Naive thymus-derived CD4-positive, alpha-beta T cell (primary cell): ENCODE measurements at regions of chr9 and their contacts with region 1.

Region 1: GRCh38 chr9:3441197-3441816 is 84.5 kb downstream of the RFX3 start:
- DNase-seq: peak in 8 of 9 donors; percentile 8 to 55 (median 39)
- ATAC-seq: peak; percentile 90
- H3K4me3 ChIP-seq: no peak overlapping the region
- H3K4me3 Mint-ChIP-seq: no peak overlapping the region
- H3K27ac ChIP-seq: no peak overlapping the region
- H3K27ac Mint-ChIP-seq: peak overlapping the region in 1 of 9 donors; percentile 49
- H3K4me1 ChIP-seq: no peaks in the 10 kb centered on the region
- H3K4me1 Mint-ChIP-seq: peaks cover 3 to 16% (median 11%) of the 10 kb centered on the region in 7 donors
- H3K27me3 ChIP-seq: no peaks in the 10 kb centered on the region
- H3K27me3 Mint-ChIP-seq: no peaks in the 10 kb centered on the region

Region 2: DNA sequence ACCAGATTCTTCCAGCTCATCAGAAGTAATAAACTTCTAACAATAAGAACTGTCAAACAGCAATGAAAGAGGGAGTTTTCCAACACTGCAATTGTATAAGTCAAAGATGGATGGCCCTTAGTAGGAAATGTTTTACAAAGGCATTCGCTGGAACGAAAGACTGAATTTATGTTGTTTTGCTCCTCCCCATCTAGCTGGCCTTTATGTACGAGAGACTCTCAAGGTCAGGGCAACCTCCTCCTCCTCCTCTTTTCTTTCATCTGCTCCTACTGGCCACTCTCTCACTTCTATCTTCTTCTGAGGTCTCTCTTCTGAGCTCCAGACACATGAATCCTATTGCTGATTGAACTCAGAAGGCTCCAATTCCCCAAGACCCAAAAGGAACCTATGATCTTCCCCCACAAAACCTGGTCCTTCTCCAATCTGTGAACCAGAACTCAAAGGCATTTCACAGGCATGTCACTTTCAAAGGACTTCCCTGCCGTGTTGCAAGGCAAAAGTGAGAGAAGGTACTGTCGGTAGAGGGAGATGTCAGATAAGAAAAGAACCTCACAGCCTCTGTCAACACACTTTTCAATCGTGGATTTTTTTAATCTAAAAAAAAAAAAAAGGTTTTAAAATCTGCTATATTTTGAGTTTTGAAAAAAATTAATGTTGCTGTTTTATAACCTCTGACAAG is 568.9 kb before region 1 on chr9:
- CTCF ChIA-PET with region 1: no interaction called
- POLR2A ChIA-PET with region 1: no interaction called
- intact Hi-C with region 1: loop called in 1 of 2 experiments (anchors 1 kb)
- DNase-seq: peak in 7 of 9 donors; percentile 18 to 56 (median 48)
- ATAC-seq: peak; percentile 79
- H3K4me3 ChIP-seq: no peak overlapping the region
- H3K4me3 Mint-ChIP-seq: peak overlapping the region in 6 of 10 donors; percentile 4 to 49 (median 22)
- H3K27ac ChIP-seq: no peak overlapping the region
- H3K27ac Mint-ChIP-seq: peak overlapping the region in 7 of 9 donors; percentile 0 to 74 (median 49)
- H3K4me1 ChIP-seq: peaks cover 0 to 5% of the 10 kb centered on the region in 2 donors
- H3K4me1 Mint-ChIP-seq: peaks cover 0 to 45% (median 23%) of the 10 kb centered on the region in 7 donors
- H3K27me3 ChIP-seq: no peaks in the 10 kb centered on the region
- H3K27me3 Mint-ChIP-seq: peaks cover 0 to 17% (median 6%) of the 10 kb centered on the region in 5 donors

Region 3: GRCh38 chr9:3331817-3332216 is 109.5 kb before region 1 on chr9:
- CTCF ChIA-PET with region 1: no interaction called
- POLR2A ChIA-PET with region 1: no interaction called
- intact Hi-C with region 1: loop called in 1 of 2 experiments (anchors 1 kb)
- DNase-seq: peak in 1 of 9 donors; percentile 1
- ATAC-seq: no peak
- H3K4me3 ChIP-seq: no peak overlapping the region
- H3K4me3 Mint-ChIP-seq: no peak overlapping the region
- H3K27ac ChIP-seq: no peak overlapping the region
- H3K27ac Mint-ChIP-seq: no peak overlapping the region
- H3K4me1 ChIP-seq: no peaks in the 10 kb centered on the region
- H3K4me1 Mint-ChIP-seq: peaks cover 0 to 9% (median 0%) of the 10 kb centered on the region in 7 donors
- H3K27me3 ChIP-seq: no peaks in the 10 kb centered on the region
- H3K27me3 Mint-ChIP-seq: no peaks in the 10 kb centered on the region

Region 4: GRCh38 chr9:3337515-3338225 is 103.6 kb before region 1 on chr9:
- CTCF ChIA-PET with region 1: no interaction called
- POLR2A ChIA-PET with region 1: no interaction called
- intact Hi-C with region 1: loop called in 1 of 2 experiments (anchors 1 kb)
- DNase-seq: no peak
- ATAC-seq: no peak
- H3K4me3 ChIP-seq: no peak overlapping the region
- H3K4me3 Mint-ChIP-seq: no peak overlapping the region
- H3K27ac ChIP-seq: no peak overlapping the region
- H3K27ac Mint-ChIP-seq: no peak overlapping the region
- H3K4me1 ChIP-seq: no peaks in the 10 kb centered on the region
- H3K4me1 Mint-ChIP-seq: peaks cover 0 to 22% (median 8%) of the 10 kb centered on the region in 7 donors
- H3K27me3 ChIP-seq: no peaks in the 10 kb centered on the region
- H3K27me3 Mint-ChIP-seq: no peaks in the 10 kb centered on the region